ENCODE measurements at regions of chr16 and their contacts with region 1.

Region 1: DNA sequence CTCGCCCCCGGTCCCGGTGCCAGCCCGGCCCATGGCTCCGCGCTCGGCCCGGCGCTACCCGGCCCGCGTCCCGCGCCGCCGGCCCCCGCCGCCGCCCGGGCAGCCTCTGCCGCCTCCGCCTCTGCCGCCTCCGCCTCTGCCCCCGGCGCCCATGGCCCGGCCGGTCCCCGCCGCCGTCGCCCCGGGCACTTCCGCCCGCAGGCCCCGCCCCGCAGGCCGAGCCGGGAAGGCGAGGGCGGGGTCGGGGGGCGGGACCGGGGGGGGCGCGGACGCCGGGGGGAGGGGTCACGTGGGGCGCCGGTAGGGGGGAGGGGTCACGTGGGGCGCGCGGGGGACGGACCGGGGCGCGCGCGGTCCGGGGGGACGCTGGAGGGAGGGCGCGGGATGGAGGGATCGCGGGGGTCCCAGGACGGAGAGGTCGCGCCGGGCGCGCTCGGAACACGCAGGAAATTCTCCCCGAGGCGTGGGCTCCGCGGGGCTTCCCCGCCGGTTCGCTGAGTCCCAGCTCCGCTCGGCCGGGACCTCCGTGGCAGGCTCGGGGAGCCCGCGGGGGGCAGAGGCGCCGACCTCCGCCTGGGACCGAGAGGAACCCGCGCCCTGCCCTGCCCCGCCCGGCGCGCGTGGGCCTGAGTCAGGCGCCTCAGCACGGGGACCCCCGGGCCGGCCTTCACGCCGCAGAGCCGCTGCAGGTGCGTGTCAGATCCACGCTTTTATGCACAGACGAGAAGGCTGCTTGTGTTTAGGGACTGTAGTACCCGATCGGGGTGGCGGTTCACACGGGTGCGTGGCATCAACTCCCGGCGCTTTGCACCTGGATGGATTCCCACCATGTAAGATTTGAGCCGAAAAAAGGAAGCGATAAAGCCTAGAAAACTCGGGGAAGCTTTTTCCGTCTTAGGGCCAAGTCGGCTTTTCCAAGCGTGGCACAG is at the start of gene PGAP6:
- DNase-seq: peak; percentile 74
- ATAC-seq: peak; percentile 69
- H3K4me3 Mint-ChIP-seq: peak within 1 kb of the TSS; percentile 82
- H3K27ac Mint-ChIP-seq: peak within 1 kb of the TSS; percentile 72
- H3K4me1 Mint-ChIP-seq: peaks cover 35% of the 10 kb centered on the region
- H3K27me3 Mint-ChIP-seq: peaks cover 4% of the 10 kb centered on the region
- total RNA-seq, gene PGAP6: 80.6 to 85.8 TPM

Region 2: DNA sequence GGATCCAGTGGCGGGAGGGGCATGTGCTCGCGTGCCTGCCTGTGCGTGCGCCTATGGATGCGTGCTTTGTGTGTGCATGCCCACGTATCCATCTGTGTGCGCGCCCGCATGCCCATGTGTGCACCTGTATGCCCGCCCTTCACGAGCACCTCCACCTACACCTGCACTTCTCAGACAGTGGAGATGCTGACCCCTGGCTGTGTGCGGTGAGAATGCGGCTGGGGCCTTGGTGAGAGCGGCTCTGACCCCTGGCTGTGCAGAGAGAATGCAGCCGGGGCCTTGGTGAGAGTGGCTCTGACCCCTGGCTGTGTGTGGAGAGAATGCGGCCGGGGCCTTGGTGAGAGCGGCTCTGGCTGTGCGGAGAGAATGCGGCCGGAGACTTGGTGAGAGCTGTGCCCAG is 63.4 kb before region 1 on chr16:
- CTCF ChIA-PET with region 1: no interaction called
- POLR2A ChIA-PET with region 1: no interaction called
- DNase-seq: no peak
- ATAC-seq: no peak
- H3K4me3 Mint-ChIP-seq: no peak overlapping the region
- H3K27ac Mint-ChIP-seq: no peak overlapping the region
- H3K4me1 Mint-ChIP-seq: peaks cover 23% of the 10 kb centered on the region
- H3K27me3 Mint-ChIP-seq: no peaks in the 10 kb centered on the region

Region 3: GRCh38 chr16:370443-370842 is 11.6 kb before region 1 on chr16 and contains the start of gene MRPL28:
- CTCF ChIA-PET with region 1: no interaction called
- POLR2A ChIA-PET with region 1: interaction called, 18 read pairs
- DNase-seq: peak; percentile 96
- ATAC-seq: peak; percentile 99
- H3K4me3 Mint-ChIP-seq: peak within 1 kb of the TSS; percentile 88
- H3K27ac Mint-ChIP-seq: peak within 1 kb of the TSS; percentile 98
- H3K4me1 Mint-ChIP-seq: peaks cover 23% of the 10 kb centered on the region
- H3K27me3 Mint-ChIP-seq: no peaks in the 10 kb centered on the region
- total RNA-seq, gene MRPL28: 95.3 to 95.8 TPM

Measured in activated CD8-positive, alpha-beta T cell treated with anti-CD3 and anti-CD28 coated beads, Interleukin-2, amount 10 ng/mL, durations not matched to agents 7 days and 5 days (primary cell).